Calu3 (cell line): ENCODE measurements at regions of chr16 and their contacts with region 1.

Region 1: GRCh38 chr16:4882633-4883285 is 35.5 kb downstream of the UBN1 start:
- DNase-seq: peak; percentile 91
- H3K4me3 Mint-ChIP-seq: peak overlapping the region; percentile 20
- H3K27ac Mint-ChIP-seq: peak overlapping the region; percentile 79
- H3K4me1 Mint-ChIP-seq: peaks cover 33% of the 10 kb centered on the region
- H3K27me3 Mint-ChIP-seq: no peaks in the 10 kb centered on the region
- CTCF ChIP-seq: no peak

Region 2: DNA sequence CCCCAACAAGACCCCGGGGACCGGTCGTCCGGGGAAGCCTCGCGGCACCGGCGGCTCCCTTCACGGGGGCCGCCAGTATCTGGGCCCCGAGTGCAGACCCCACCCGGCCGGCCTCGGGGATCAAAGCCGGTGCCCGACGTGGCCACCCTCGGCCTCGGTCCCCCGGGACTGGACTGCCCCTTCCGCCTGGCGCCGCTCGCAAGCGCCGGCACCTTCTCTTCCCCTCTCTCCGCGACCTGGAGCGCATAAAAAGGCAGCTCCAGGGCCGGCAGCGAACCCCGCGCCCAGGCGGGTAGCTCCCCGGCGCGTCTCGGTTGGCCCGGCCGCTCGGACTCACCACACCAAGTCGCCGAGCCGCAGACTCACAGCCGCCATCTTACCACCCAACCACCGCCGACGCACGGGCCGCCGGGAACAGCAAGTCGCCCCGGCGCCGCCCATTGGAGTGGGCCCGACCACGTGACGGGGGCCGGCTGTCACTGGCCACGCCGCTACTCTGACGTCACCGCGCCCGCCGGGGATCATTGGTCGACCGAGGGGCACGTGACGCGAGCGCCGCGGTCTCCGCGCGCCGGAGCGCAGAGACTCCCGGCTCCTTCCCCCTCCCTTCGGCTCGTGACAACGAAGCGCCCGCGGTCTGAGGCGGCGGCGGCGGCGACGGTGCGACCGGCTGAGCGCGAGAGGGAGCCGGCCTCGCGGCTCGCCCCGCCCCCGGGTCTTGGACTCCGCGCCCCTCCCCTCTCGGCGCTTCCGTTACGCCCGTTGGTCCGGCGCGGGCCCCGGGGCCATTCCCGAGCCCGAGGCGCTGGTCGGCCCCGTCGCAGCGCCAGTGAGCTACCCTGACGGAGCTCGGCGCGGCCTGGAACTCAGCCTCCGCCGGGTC is 35.6 kb before region 1 on chr16 and contains the starts of genes GLYR1 and UBN1:
- CTCF ChIA-PET with region 1: no interaction called
- intact Hi-C with region 1: loop called (anchors 2 kb)
- DNase-seq: peak; percentile 100
- H3K4me3 Mint-ChIP-seq: peak within 1 kb of the TSS; percentile 100
- H3K27ac Mint-ChIP-seq: peak within 1 kb of the TSS; percentile 80
- H3K4me1 Mint-ChIP-seq: peaks cover 36% of the 10 kb centered on the region
- H3K27me3 Mint-ChIP-seq: no peaks in the 10 kb centered on the region
- CTCF ChIP-seq: no peak
- total RNA-seq, gene GLYR1: 158 and 159 TPM in 2 replicates
- total RNA-seq, gene UBN1: 50.5 and 55.4 TPM in 2 replicates

Region 3: DNA sequence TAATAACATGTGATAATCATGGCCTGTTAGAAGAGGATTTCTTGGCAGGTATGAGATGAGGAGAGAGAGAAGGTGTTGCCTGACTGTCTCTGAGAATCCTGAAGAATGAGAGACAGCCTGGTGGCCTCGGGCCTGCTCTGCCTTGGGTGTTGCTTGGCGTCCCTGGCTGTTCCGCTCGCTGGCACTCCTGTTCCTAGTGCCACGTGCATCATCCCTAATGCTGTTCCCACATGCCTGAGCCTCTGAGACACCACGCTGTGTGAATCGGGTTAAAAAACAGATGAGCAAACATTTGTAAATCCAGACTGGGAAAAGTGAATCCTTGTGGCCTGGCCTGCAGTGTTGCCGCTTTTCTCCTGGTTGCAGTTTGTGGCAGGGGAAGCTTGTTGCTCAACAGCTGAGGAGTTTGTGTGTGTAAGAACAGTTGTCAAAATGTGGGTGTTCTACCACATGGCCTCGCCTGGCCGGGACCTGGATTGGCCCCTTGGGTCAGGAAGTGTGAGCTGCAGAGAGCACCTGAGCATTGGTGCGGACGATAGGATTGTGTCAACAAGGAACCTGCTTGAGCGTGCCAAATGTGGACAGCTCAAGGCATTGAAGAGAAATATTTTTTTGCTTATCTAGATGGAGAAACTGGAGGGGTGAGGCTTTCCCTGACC is 13.5 kb before region 1 on chr16:
- CTCF ChIA-PET with region 1: no interaction called
- intact Hi-C with region 1: loop called (anchors 2 kb)
- DNase-seq: no peak
- H3K4me3 Mint-ChIP-seq: peak overlapping the region; percentile 64
- H3K27ac Mint-ChIP-seq: peak overlapping the region; percentile 9
- H3K4me1 Mint-ChIP-seq: peaks cover 41% of the 10 kb centered on the region
- H3K27me3 Mint-ChIP-seq: no peaks in the 10 kb centered on the region
- CTCF ChIP-seq: no peak

Region 4: GRCh38 chr16:4924593-4925378 is 42.0 kb after region 1 on chr16:
- CTCF ChIA-PET with region 1: no interaction called
- intact Hi-C with region 1: loop called (anchors 2 kb)
- DNase-seq: peak; percentile 95
- H3K4me3 Mint-ChIP-seq: peak overlapping the region; percentile 66
- H3K27ac Mint-ChIP-seq: peak overlapping the region; percentile 94
- H3K4me1 Mint-ChIP-seq: peaks cover 37% of the 10 kb centered on the region
- H3K27me3 Mint-ChIP-seq: no peaks in the 10 kb centered on the region
- CTCF ChIP-seq: no peak

Region 5: GRCh38 chr16:4936991-4937781 is 54.4 kb after region 1 on chr16 and contains the start of gene PPL:
- CTCF ChIA-PET with region 1: no interaction called
- intact Hi-C with region 1: loop called (anchors 5 kb)
- DNase-seq: peak; percentile 100
- H3K4me3 Mint-ChIP-seq: peak within 1 kb of the TSS; percentile 97
- H3K27ac Mint-ChIP-seq: peak within 1 kb of the TSS; percentile 77
- H3K4me1 Mint-ChIP-seq: peaks cover 28% of the 10 kb centered on the region
- H3K27me3 Mint-ChIP-seq: no peaks in the 10 kb centered on the region
- CTCF ChIP-seq: no peak
- total RNA-seq, gene PPL: 75.0 and 104 TPM in 2 replicates